ENCODE measurements at regions of chr11 and their contacts with region 1.

Region 1: GRCh38 chr11:46631676-46632075 is 14.3 kb downstream of the ATG13 start:
- DNase-seq: no peak
- H3K4me3 ChIP-seq: no peak overlapping the region
- CTCF ChIP-seq: no peak
- POLR2A ChIP-seq: no peak

Region 2: DNA sequence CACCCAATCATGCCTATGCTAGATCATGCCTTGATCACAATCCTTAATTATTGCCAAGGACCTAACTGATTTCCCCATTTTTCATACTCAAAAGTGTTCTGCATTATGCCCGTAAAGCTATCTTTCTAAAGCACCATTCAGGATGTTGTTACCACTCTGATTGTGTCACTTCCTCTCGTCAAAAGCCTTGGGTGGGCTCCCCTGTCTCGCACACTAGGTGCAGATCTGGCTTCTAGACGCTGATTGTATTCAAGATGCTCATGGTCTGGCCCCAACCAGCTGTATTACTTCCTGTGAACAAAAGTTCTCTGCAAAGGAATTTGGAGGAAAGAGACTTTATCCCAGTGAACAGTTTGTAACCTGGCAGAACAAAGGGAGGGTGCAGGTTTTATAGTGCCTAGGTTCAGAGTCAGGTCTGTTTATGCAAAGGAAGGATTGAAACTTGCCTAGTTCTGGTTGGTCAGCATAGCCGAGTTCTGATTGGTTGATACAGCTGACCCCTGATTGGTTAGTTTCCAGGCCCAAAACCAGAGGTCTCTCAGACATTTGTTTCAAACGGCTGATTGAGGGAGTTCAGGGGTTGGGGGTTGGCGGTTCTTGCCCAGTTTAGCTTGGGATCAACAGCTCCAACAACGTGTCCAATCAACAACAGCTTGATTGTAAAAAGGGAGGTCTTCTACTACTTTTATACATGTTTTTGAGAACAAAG is 11.1 kb after region 1 on chr11:
- intact Hi-C with region 1: loop called (anchors 1 kb)
- DNase-seq: no peak
- H3K4me3 ChIP-seq: no peak overlapping the region
- CTCF ChIP-seq: no peak
- POLR2A ChIP-seq: no peak

Measured in lower leg skin (tissue), 4 donors.